ENCODE measurements at regions of chr2 and their contacts with region 1.

Region 1: GRCh38 chr2:43169987-43170386 is 56.4 kb downstream of the ZFP36L2 start:
- DNase-seq: peak; percentile 83
- ATAC-seq: peak; percentile 28
- H3K4me3 Mint-ChIP-seq: no peak overlapping the region
- H3K27ac Mint-ChIP-seq: peak overlapping the region; percentile 86
- H3K4me1 Mint-ChIP-seq: peaks cover 64% of the 10 kb centered on the region
- H3K27me3 Mint-ChIP-seq: no peaks in the 10 kb centered on the region

Region 2: GRCh38 chr2:43142921-43143438 is 27.0 kb before region 1 on chr2:
- CTCF ChIA-PET with region 1: interaction called, 16 read pairs
- DNase-seq: peak; percentile 75
- ATAC-seq: peak; percentile 70
- H3K4me3 Mint-ChIP-seq: peak overlapping the region; percentile 70
- H3K27ac Mint-ChIP-seq: peak overlapping the region; percentile 64
- H3K4me1 Mint-ChIP-seq: peaks cover 43% of the 10 kb centered on the region
- H3K27me3 Mint-ChIP-seq: no peaks in the 10 kb centered on the region

Region 3: DNA sequence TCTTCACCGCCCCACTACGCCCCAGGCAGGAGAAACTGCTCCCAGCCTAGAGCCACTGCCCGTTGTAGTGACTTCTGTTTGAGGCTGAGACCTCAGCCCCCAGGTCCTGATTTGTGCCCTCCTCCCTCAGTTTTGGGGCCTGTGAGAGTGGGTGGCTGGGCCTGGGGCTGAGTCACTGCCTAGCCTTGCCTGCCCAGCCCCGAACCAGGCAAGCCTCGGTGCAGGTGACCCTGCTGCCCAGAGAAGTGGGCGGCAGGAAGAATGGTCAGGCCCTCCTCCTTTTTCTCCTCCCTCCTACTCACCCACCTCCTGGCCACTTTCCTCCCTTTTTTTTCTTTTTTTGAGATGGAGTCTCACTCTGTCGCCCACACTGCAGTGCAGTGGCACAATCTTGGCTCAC is 10.2 kb before region 1 on chr2:
- CTCF ChIA-PET with region 1: interaction called, 13 read pairs
- DNase-seq: no peak
- ATAC-seq: no peak
- H3K4me3 Mint-ChIP-seq: no peak overlapping the region
- H3K27ac Mint-ChIP-seq: peak overlapping the region; percentile 95
- H3K4me1 Mint-ChIP-seq: peaks cover 55% of the 10 kb centered on the region
- H3K27me3 Mint-ChIP-seq: no peaks in the 10 kb centered on the region

Region 4: DNA sequence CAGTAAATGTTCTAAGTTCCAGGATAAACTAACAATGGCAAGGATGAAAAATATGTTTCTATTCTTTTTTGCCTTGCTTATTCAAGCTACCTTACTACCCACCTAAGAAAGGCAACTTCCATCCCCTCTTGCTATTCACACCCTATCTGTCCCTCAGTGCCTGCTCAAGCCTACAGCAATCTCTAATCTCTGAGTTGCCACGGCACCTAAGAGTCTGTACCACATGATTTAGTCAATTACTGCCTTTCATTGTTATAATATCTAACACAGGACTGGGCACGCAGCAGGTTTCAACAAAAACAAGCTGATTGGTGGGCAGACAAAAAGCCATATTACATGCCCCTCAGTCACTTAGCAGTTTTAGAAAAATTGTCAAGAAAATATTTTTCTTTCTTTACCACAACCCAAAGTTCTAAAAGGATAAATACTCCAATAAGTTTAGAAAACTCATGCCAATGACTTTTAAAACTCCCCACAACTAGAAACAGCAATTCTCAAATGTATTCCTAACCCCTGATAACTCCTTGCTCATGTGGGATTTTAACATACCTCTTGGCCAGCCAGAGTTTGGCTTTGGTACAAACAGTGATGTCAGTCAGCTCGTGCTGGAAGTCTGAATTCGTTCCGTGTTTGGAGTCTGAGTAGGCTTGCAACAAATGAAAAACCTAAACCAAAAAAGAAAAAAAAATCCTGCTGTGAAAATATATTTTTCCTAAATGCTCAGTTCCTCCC is 173.8 kb after region 1 on chr2:
- CTCF ChIA-PET with region 1: no interaction called
- DNase-seq: no peak
- ATAC-seq: no peak
- H3K4me3 Mint-ChIP-seq: no peak overlapping the region
- H3K27ac Mint-ChIP-seq: no peak overlapping the region
- H3K4me1 Mint-ChIP-seq: no peaks in the 10 kb centered on the region
- H3K27me3 Mint-ChIP-seq: no peaks in the 10 kb centered on the region

Measured in activated CD8-positive, alpha-beta memory T cell treated with anti-CD3 and anti-CD28 coated beads, Interleukin-2, amount 10 ng/mL, durations not matched to agents 7 days and 5 days (primary cell).